Adrenal gland (tissue), 19 donors: ENCODE measurements at regions of chr9 and their contacts with region 1.

Region 1: GRCh38 chr9:72592502-72593403 is 71.3 kb downstream of the TMC1 start:
- DNase-seq: peak in 2 of 7 donors; percentile 37 to 69
- H3K4me3 ChIP-seq: no peak overlapping the region
- H3K27ac ChIP-seq: no peak overlapping the region
- H3K4me1 ChIP-seq: no peaks in the 10 kb centered on the region
- H3K27me3 ChIP-seq: no peaks in the 10 kb centered on the region
- CTCF ChIP-seq: peak; percentile 84 to 94 (median 92)
- POLR2A ChIP-seq: no peak

Region 2: DNA sequence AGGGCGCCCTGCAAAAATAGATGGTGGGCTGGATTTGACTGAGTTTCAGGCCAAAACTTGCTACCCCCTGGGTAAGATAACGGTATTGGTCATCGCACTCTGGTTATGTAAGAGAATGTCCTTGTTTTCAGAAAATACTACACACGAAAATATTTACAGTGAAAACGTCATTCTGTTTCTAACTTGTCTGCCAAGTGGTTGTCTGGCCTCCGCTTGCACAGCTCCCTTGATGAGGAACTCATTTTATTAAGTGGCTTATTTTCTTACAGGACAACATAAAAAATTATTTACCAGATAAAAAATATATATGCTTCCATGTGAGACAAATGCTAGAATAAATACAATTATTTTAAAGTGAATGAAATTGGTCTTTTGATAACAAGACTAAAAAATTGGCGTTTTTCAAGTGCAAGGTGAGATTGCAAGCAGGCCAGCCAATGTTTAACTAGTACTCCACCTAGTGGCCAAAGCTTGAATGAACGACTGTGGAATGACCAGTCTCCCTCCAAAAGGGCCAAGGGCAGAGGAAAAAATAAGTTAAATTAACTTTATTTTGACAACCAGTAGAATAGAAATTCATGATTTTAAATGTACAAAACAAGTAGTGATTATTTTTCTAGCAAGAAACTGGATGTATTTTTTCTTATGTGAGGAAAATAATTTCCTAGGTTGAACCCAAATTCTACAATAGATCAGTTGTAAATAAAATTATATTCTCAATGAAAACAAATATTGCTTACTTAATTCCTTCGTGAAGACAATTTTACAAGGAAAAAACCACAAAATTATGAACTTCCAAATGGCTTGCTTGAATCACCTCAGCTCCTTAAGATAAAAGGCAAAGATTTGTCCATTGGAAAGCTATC is 320.9 kb before region 1 on chr9:
- intact Hi-C with region 1: loop called in 1 of 2 experiments (anchors 10 kb)
- DNase-seq: peak; percentile 36 to 74 (median 68)
- H3K4me3 ChIP-seq: no peak overlapping the region
- H3K27ac ChIP-seq: no peak overlapping the region
- H3K4me1 ChIP-seq: no peaks in the 10 kb centered on the region
- H3K27me3 ChIP-seq: no peaks in the 10 kb centered on the region
- CTCF ChIP-seq: peak; percentile 71 to 93 (median 82)
- POLR2A ChIP-seq: no peak

Region 3: DNA sequence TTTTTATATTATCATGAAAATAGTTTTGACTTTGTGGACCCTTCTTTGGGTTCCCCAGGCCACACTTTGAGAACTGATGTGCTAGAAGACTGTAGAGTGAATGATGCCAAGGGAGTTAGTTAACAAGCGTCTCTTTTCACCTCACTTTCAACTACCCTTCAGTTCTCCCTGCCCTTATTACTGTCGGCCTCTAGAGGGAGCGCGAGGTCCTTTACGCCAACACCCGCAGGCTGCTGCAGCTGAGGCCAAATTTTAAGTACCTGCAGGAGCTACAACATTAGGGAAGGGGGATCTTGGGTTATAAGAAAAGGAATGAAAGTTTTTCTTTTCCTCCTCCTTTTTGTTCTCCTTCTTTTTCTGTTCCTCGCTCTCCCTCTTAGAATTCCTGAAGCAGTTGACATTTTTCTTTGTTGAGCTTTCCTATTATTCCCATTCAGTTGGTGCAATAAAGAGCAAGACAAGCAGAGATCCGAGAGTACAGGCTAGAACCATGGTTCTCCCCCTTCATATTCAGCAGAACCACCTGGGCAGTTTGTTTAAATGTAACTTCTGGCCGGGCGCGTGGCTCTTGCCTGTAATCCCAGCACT is 311.7 kb before region 1 on chr9:
- intact Hi-C with region 1: loop called (anchors 5 to 10 kb)
- DNase-seq: peak; percentile 60 to 84 (median 75)
- H3K4me3 ChIP-seq: no peak overlapping the region
- H3K27ac ChIP-seq: no peak overlapping the region
- H3K4me1 ChIP-seq: no peaks in the 10 kb centered on the region
- H3K27me3 ChIP-seq: no peaks in the 10 kb centered on the region
- CTCF ChIP-seq: peak; percentile 82 to 93 (median 88)
- POLR2A ChIP-seq: no peak

Region 4: DNA sequence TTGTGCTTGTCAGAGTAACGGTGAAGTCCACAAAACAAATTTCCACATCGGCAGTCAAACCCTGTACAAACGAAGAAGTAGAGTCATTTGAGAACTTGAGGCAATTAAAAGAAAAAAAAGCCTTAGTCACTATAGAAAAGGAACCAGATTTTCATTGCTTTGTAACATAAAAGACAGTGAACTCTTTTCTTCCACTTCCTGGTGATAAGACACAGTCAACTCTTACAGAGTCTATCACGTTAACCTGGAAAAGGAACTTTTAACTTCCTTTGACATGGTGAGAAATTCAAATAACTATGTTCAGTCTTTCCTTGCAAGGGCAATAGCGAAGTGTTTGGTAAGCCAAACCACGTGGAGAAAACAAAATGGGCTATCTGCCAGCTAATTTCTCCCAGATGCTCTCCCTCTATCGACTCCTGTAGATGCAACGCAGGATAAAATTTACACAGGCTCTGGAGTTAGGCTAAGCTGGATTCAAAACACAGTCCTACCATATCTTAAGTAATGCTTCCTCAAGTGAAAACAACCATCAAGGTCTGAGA is 236.6 kb before region 1 on chr9:
- intact Hi-C with region 1: loop called in 1 of 2 experiments (anchors 10 kb)
- DNase-seq: peak in 3 of 7 donors; percentile 18 to 39 (median 30)
- H3K4me3 ChIP-seq: no peak overlapping the region
- H3K27ac ChIP-seq: peak overlapping the region in 3 of 5 donors; percentile 40 to 53 (median 44)
- H3K4me1 ChIP-seq: peaks cover 40 to 53% of the 10 kb centered on the region in 2 donors
- H3K27me3 ChIP-seq: no peaks in the 10 kb centered on the region
- CTCF ChIP-seq: no peak
- POLR2A ChIP-seq: no peak

Region 5: DNA sequence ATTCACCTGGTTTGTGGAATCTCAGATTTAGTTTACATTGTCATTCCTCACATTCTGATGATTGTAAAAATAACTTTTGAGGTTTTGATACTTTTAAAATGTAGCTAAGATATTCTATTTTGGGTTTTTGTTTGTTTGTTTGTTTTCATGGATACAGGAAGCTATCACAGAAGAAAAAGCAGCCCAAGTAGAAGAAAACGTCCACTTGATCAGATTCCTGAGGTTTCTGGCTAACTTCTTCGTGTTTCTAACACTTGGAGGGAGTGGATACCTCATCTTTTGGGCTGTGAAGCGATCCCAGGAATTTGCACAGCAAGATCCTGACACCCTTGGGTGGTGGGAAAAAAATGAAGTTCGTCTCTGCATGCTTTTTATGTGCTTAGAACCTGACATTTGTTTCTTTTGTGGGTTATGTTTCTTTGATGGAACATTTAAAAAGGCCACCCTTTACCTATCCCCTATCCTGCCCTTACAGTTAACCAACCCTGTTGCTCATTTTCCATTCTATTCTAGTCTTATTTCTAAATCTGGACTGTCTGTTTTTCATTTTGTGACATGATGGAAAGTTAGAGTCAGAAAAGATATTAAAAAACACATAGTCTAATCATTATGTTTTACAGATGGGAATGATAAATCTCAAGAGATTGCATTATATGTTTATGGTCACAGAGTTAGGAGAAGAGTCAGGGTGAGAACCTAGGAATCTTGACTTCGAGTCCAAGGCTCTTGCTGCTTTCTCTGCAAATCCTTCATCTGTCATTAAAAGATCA is 196.4 kb after region 1 on chr9:
- intact Hi-C with region 1: no loop called
- DNase-seq: no peak
- H3K4me3 ChIP-seq: no peak overlapping the region
- H3K27ac ChIP-seq: no peak overlapping the region
- H3K4me1 ChIP-seq: no peaks in the 10 kb centered on the region
- H3K27me3 ChIP-seq: no peaks in the 10 kb centered on the region
- CTCF ChIP-seq: no peak
- POLR2A ChIP-seq: no peak